Caco-2 (cell line): ENCODE measurements at regions of chr4 and their contacts with region 1.

Region 1: DNA sequence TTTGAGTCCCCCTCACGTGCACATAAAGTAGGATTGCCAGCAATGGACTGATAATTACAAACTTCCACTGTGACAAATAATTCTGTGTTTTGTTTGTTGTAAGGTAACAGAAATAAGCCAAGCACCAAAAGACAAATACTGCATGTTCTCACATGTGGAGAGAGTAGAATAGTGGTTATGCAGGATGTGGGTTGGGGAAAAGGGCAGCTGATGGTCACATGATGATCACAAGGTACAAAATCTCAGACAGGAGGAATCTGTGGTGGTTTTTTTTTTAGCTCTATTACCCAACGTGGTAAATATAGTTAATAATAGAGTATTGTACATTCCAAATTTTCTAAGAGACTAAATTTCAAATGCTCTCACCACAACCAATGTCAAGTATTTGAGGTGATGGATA is 182.3 kb downstream of the BANK1 start:
- DNase-seq: no peak
- H3K4me3 ChIP-seq: no peak overlapping the region
- H3K4me3 Mint-ChIP-seq: no peak overlapping the region
- H3K27ac Mint-ChIP-seq: no peak overlapping the region
- H3K4me1 ChIP-seq: peaks cover 19% of the 10 kb centered on the region; the same call in 1 of the 2 replicates
- H3K4me1 Mint-ChIP-seq: peaks cover 26% of the 10 kb centered on the region
- H3K27me3 ChIP-seq: no peaks in the 10 kb centered on the region
- H3K27me3 Mint-ChIP-seq: no peaks in the 10 kb centered on the region
- CTCF ChIP-seq: no peak

Region 2: DNA sequence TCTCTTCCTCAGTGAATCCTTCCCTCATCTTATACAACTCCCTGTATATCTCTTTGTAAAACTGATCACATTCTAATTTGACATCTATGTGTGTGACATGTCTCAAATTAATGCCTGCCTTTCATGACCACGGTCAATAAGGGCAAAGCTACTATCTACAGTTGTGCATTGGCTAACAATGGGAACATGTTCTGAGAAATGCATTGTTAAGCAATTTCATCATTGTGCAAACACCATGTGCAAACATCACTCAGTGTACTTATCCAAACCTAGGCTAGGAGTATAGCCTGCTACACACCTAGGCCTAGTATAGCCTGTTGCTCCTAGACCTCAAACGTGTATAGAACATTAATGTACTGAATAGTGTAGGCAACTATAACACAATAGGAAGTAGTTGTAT is 87.2 kb before region 1 on chr4:
- CTCF ChIA-PET with region 1: no interaction called
- POLR2A ChIA-PET with region 1: no interaction called
- intact Hi-C with region 1: loop called (anchors 5 kb)
- DNase-seq: peak; percentile 50 to 71
- H3K4me3 ChIP-seq: no peak overlapping the region
- H3K4me3 Mint-ChIP-seq: peak overlapping the region; percentile 20
- H3K27ac Mint-ChIP-seq: peak overlapping the region; percentile 87
- H3K4me1 ChIP-seq: peaks cover 17% of the 10 kb centered on the region
- H3K4me1 Mint-ChIP-seq: peaks cover 15% of the 10 kb centered on the region
- H3K27me3 ChIP-seq: no peaks in the 10 kb centered on the region
- H3K27me3 Mint-ChIP-seq: no peaks in the 10 kb centered on the region
- CTCF ChIP-seq: no peak

Region 3: DNA sequence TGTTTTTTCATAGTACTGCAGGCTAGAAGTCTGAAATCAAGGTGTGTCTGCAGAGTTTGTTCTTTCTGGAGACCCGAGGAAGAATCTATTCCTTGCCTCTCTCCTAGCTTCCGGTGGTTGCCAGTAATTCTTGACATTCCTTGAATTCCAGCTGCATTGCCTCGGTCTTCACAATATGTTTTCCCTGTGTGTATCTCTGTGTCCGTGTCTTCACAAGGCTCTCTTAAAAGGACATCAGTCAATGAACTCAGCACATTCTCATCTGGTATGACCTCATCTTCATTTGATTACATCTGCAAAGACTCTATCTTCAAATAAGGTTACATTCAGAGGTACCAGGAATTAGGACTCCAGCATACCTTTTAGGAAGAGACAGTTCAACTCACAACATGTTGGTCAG is 18.8 kb before region 1 on chr4:
- CTCF ChIA-PET with region 1: no interaction called
- POLR2A ChIA-PET with region 1: no interaction called
- intact Hi-C with region 1: loop called (anchors 2 kb)
- DNase-seq: peak; percentile 52 to 65
- H3K4me3 ChIP-seq: no peak overlapping the region
- H3K4me3 Mint-ChIP-seq: peak overlapping the region; percentile 50
- H3K27ac Mint-ChIP-seq: peak overlapping the region; percentile 96
- H3K4me1 ChIP-seq: peaks cover 43% of the 10 kb centered on the region
- H3K4me1 Mint-ChIP-seq: peaks cover 19% of the 10 kb centered on the region
- H3K27me3 ChIP-seq: no peaks in the 10 kb centered on the region
- H3K27me3 Mint-ChIP-seq: no peaks in the 10 kb centered on the region
- CTCF ChIP-seq: no peak